ENCODE measurements at regions of chr2 and their contacts with region 1.

Region 1: DNA sequence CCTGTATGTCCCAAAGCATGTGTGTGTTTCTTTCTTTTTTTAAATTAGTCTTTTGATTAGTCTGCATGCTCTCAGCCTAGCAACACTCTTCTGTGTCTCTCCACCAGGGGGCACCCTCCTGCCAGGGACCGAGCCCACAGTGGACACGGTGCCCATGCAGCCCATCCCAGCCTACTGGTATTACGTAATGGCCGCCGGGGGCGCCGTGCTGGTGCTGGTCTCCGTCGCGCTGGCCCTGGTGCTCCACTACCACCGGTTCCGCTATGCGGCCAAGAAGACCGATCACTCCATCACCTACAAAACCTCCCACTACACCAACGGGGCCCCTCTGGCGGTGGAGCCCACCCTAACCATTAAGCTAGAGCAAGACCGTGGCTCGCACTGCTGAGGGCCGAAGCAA is 93.8 kb downstream of the NRP2 start:
- DNase-seq: peak; percentile 42
- H3K4me3 Mint-ChIP-seq: no peak overlapping the region
- H3K27ac Mint-ChIP-seq: no peak overlapping the region
- H3K4me1 Mint-ChIP-seq: peaks cover 4% of the 10 kb centered on the region
- H3K27me3 Mint-ChIP-seq: peaks cover 26% of the 10 kb centered on the region

Region 2: DNA sequence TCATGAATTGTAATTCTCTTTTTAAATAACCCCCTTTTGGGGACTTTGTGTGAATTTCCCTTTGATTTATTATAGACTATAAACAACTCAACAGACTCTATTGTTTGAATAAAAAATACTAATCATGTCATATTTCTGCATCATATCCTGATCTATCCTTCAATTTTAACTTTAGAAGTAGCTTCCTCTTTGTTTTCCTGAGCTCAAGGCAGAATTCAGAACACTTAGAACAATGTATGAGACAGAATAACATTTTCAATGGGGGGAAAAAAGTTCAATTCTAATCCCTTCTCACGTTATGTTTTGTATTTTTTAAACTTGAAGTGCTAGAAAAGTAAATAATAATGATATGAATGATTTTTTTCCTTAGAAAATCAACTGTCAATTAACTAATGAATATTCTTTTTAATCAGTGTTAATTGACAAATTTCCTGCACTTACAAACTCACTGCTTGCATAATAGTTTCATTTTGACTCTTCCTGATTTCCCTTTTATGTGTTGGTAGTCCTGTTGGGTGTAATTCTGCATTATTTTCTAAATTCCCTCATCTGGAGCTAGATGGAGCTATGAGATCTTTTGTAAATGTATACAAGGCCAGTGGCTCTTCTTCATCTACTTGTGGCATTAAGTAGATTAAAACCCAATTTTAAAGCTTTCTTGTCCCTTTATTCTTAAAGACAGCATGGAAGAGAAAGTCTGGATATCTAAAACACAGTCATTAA is 904.7 kb before region 1 on chr2:
- CTCF ChIA-PET with region 1: no interaction called
- POLR2A ChIA-PET with region 1: no interaction called
- intact Hi-C with region 1: no loop called
- DNase-seq: no peak
- H3K4me3 Mint-ChIP-seq: no peak overlapping the region
- H3K27ac Mint-ChIP-seq: no peak overlapping the region
- H3K4me1 Mint-ChIP-seq: peaks cover 16% of the 10 kb centered on the region
- H3K27me3 Mint-ChIP-seq: no peaks in the 10 kb centered on the region

Region 3: GRCh38 chr2:205885492-205886099 is 109.5 kb after region 1 on chr2:
- CTCF ChIA-PET with region 1: interaction called, 23 read pairs
- POLR2A ChIA-PET with region 1: no interaction called
- intact Hi-C with region 1: no loop called
- DNase-seq: peak; percentile 81
- H3K4me3 Mint-ChIP-seq: no peak overlapping the region
- H3K27ac Mint-ChIP-seq: no peak overlapping the region
- H3K4me1 Mint-ChIP-seq: no peaks in the 10 kb centered on the region
- H3K27me3 Mint-ChIP-seq: peaks cover 15% of the 10 kb centered on the region

Region 4: GRCh38 chr2:205925373-205926337 is 149.5 kb after region 1 on chr2:
- CTCF ChIA-PET with region 1: interaction called, 24 read pairs
- POLR2A ChIA-PET with region 1: no interaction called
- intact Hi-C with region 1: no loop called
- DNase-seq: peak; percentile 82
- H3K4me3 Mint-ChIP-seq: no peak overlapping the region
- H3K27ac Mint-ChIP-seq: no peak overlapping the region
- H3K4me1 Mint-ChIP-seq: peaks cover 6% of the 10 kb centered on the region
- H3K27me3 Mint-ChIP-seq: peaks cover 44% of the 10 kb centered on the region

Measured in activated CD4-positive, alpha-beta memory T cell treated with anti-CD3 and anti-CD28 coated beads for 36 hours (primary cell).